Ascending aorta (tissue), 2 donors: ENCODE measurements at regions of chr14 and their contacts with region 1.

Region 1: GRCh38 chr14:55051426-55052268 is at the start of gene MAPK1IP1L:
- DNase-seq: peak; percentile 57 to 94
- H3K4me3 ChIP-seq: peak within 1 kb of the TSS; percentile 88 to 94
- H3K27ac ChIP-seq: peak within 1 kb of the TSS; percentile 99 to 100
- H3K4me1 ChIP-seq: peaks cover 6 to 20% of the 10 kb centered on the region in 2 donors
- H3K27me3 ChIP-seq: no peaks in the 10 kb centered on the region
- CTCF ChIP-seq: peak; percentile 100
- total RNA-seq, gene MAPK1IP1L: 51.8 TPM

Region 2: GRCh38 chr14:55071870-55072640 is 20.4 kb after region 1 on chr14:
- intact Hi-C with region 1: loop called (anchors 1 kb)
- DNase-seq: peak in 1 of 2 donors; percentile 83
- H3K4me3 ChIP-seq: peak overlapping the region in 1 of 2 donors; percentile 45
- H3K27ac ChIP-seq: peak overlapping the region; percentile 84 to 90
- H3K4me1 ChIP-seq: peaks cover 0 to 21% of the 10 kb centered on the region in 2 donors
- H3K27me3 ChIP-seq: no peaks in the 10 kb centered on the region
- CTCF ChIP-seq: no peak

Region 3: DNA sequence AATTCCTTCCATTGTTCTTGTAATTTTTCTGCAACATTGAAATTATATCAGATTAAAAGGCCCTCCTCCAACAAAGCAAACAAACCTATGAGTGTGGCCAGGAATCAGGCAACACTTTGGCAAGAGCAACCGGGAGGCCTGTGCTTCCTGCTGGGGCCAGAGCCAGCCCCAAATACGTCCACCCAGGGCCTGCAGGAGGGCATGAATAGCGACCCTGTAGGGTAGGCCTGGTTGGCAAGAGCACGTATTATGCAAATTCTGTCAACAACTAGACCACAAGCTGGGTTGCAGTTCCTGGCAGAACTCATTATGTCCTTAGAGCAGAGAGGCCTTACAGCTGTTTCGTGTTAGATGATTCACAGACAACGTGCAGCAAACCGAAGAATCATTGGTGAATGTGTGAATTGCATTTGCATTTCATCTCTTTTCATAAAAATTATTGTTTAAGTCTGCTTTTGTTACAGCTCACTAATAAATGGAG is 50.5 kb after region 1 on chr14:
- intact Hi-C with region 1: loop called (anchors 5 kb)
- DNase-seq: peak; percentile 53 to 86
- H3K4me3 ChIP-seq: no peak overlapping the region
- H3K27ac ChIP-seq: peak overlapping the region; percentile 73 to 84
- H3K4me1 ChIP-seq: peaks cover 18 to 30% of the 10 kb centered on the region in 2 donors
- H3K27me3 ChIP-seq: no peaks in the 10 kb centered on the region
- CTCF ChIP-seq: no peak

Region 4: DNA sequence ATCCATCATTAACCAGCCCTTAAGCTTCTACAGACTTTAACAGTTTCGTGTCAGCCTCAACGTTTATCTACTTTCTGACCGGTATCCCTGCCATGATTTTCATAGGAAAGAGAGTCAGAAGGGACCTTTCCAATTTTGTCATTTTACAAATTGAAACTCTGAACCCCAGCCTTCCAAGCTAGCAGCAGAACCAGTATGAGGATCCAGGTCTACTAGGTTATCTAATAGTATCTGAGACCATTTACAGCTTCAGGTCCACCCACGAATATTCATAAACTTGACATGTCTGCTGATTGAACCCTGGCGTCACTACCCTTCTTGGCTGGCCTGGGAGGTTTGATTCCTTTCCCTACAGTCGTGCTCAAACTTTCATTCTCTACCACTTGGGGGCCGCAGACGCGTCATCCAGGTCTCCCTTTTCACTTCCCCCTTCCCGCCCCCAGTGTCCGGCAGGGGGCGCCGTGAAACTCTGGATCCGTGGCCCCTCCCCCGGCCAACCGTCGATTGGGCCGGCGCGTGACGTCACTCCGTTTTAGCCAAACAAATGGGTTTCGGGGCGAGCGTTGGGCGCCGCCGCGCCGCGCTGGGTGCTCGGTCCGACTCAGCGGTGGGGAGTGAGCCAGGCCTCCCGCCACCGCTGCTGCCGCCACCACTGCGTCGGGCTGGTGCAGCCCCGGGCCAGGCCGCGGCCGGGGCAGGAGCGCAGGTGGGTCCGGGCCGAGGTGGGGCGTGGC is 219.4 kb after region 1 on chr14 and contains the start of gene FBXO34:
- intact Hi-C with region 1: loop called (anchors 10 kb)
- DNase-seq: peak; percentile 95 to 100
- H3K4me3 ChIP-seq: peak within 1 kb of the TSS; percentile 89 to 90
- H3K27ac ChIP-seq: peak within 1 kb of the TSS; percentile 80 to 90
- H3K4me1 ChIP-seq: peaks cover 0 to 20% of the 10 kb centered on the region in 2 donors
- H3K27me3 ChIP-seq: no peaks in the 10 kb centered on the region
- CTCF ChIP-seq: peak; percentile 99
- total RNA-seq, gene FBXO34: 18.0 TPM